Activated naive CD4-positive, alpha-beta T cell treated with anti-CD3 and anti-CD28 coated beads for 36 hours (primary cell): ENCODE measurements at regions of chr11 and their contacts with region 1.

Region 1: GRCh38 chr11:94623120-94623735 is 56.1 kb downstream of the PIWIL4 start:
- DNase-seq: peak; percentile 78
- H3K4me3 Mint-ChIP-seq: no peak overlapping the region
- H3K27ac Mint-ChIP-seq: no peak overlapping the region
- H3K4me1 Mint-ChIP-seq: no peaks in the 10 kb centered on the region
- H3K27me3 Mint-ChIP-seq: peaks cover 7% of the 10 kb centered on the region

Region 2: GRCh38 chr11:94741022-94741679 is 117.9 kb after region 1 on chr11:
- CTCF ChIA-PET with region 1: no interaction called
- intact Hi-C with region 1: loop called (anchors 1 kb)
- DNase-seq: peak; percentile 4
- H3K4me3 Mint-ChIP-seq: peak overlapping the region; percentile 68
- H3K27ac Mint-ChIP-seq: no peak overlapping the region
- H3K4me1 Mint-ChIP-seq: peaks cover 12% of the 10 kb centered on the region
- H3K27me3 Mint-ChIP-seq: peaks cover 32% of the 10 kb centered on the region

Region 3: DNA sequence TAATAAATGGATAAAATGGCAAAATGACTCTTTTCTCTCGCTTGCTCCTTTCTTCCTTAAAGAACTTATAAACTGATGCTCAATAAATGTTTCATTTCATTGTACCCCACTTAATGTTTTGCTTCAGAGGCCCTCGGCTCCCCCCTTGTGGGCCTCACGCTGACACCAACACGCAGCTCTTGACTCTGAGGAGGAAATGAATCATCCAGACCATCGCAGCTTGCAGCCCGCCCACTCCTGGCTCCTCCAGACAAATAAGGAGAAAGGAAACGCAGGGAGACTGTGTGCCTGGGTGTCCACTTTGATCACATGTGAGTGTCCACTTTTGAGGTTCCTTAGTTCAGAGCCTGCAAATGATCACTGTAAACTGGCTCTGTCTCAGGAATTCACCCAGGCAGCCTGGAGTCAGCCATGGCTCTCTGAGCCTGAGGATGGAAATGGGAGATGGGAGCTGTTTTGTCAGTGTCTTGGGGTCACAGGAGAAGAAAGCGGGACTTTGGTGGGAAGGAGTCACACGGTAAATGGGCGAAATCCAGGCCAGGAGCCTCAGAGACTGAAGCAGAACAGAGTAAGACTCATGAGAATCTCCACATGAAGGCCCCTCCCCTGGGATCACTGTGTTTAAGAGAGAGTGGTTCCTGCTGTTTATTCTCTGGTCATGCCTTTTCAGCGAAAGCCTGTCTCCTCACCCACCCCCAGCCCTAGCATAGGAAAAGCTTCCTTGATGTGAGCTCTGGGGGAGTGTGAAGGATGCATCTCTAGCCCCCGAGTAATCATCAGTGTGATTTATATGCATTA is 253.6 kb after region 1 on chr11:
- CTCF ChIA-PET with region 1: interaction called, 3 read pairs
- intact Hi-C with region 1: loop called (anchors 1 kb)
- DNase-seq: peak; percentile 86
- H3K4me3 Mint-ChIP-seq: no peak overlapping the region
- H3K27ac Mint-ChIP-seq: peak overlapping the region; percentile 59
- H3K4me1 Mint-ChIP-seq: peaks cover 23% of the 10 kb centered on the region
- H3K27me3 Mint-ChIP-seq: no peaks in the 10 kb centered on the region

Region 4: GRCh38 chr11:95138448-95138847 is 515.2 kb after region 1 on chr11:
- CTCF ChIA-PET with region 1: no interaction called
- intact Hi-C with region 1: loop called (anchors 1 kb)
- DNase-seq: no peak
- H3K4me3 Mint-ChIP-seq: no peak overlapping the region
- H3K27ac Mint-ChIP-seq: no peak overlapping the region
- H3K4me1 Mint-ChIP-seq: peaks cover 7% of the 10 kb centered on the region
- H3K27me3 Mint-ChIP-seq: peaks cover 9% of the 10 kb centered on the region

Region 5: GRCh38 chr11:95764267-95764898 is 1141.2 kb after region 1 on chr11:
- CTCF ChIA-PET with region 1: no interaction called
- intact Hi-C with region 1: loop called (anchors 1 kb)
- DNase-seq: no peak
- H3K4me3 Mint-ChIP-seq: no peak overlapping the region
- H3K27ac Mint-ChIP-seq: no peak overlapping the region
- H3K4me1 Mint-ChIP-seq: no peaks in the 10 kb centered on the region
- H3K27me3 Mint-ChIP-seq: peaks cover 1% of the 10 kb centered on the region